ENCODE measurements at regions of chr6 and their contacts with region 1.

Region 1: GRCh38 chr6:142146828-142147662 is at the starts of genes NMBR and VTA1:
- DNase-seq: peak; percentile 84
- CTCF ChIP-seq: peak; percentile 79

Region 2: DNA sequence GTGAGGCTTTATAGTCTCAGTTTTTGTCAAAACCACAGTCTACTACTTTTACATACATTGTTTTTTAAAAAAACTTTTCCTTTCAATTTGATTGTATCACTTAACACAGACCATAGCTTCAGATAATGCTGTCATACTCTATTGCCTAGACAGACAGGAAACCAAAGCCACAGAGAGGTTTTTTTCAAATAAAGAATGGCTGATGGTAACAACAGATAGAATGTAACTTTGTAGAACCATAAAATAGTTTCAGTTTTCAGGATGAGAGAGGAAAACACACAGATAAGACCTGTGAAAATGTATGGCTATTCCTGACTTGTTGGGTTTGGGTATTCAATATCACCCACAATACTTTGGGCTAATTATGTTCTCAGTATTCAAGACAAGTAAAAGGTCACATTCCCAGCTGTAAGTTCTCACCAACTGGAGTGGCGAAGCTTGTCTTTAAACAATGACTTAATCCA is 248.8 kb after region 1 on chr6:
- in situ Hi-C with region 1: loop called (anchors 10 kb)
- DNase-seq: peak; percentile 23
- CTCF ChIP-seq: no peak

Measured in GM13976 (cell line).